ENCODE measurements at regions of chr6 and their contacts with region 1.

Region 1: DNA sequence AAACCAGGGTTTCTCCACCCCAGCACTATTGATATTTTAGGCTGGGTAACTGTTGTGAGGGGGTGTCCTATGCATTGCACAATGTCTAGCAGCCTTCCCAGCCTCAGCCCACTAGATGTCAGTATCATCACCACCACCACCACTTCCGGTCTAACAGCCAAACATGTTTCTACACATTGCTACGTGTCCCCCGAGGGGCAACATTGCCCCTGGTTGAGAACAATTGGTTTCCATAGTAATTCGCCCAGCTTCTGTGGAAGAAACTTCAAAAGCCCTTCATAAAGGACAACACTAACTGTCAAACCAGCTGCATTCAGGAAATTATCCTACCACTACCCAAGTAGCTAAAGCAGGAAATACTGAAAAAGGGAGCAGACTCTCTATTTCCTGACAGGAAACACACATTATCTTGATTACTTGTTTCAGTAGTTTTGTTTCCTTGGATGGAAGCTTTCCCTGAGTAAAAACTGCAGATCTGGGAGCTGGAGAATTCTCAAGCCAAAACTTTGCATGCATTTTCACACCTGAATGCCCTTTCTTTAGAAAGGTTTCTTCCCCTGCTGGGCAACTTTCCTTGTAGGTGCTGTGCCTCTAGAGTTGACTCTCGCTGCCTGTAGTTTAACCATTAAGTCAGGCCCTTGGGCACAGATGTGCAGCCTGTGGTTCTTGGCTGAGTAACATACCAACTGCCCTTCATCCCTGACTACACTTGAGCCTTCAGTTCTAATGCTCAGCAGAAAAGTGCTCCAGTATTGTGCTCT is 23.6 kb downstream of the PKHD1 start:
- DNase-seq: peak; percentile 76
- H3K4me3 Mint-ChIP-seq: peak overlapping the region; percentile 20
- H3K27ac Mint-ChIP-seq: peak overlapping the region; percentile 72
- H3K4me1 Mint-ChIP-seq: peaks cover 10% of the 10 kb centered on the region
- H3K27me3 Mint-ChIP-seq: no peaks in the 10 kb centered on the region

Region 2: DNA sequence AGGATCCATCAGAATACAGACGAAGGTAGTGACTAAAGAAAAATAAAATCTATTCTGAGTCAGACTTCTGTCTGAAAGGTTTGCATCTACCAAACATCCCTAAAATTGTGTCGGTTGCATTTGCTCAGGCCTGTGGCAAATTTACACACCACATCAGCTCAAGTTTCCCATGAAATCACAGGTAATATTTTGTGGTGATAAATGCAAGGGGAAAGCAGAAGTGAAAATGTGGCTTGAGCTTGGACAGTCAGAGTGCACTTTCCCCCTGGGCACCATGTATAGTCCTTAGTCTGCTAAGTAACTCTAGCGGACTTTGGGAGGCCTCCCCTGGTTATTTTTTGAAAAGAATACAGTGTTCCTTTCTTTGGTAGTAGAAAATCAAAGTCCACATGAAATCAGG is 135.4 kb before region 1 on chr6:
- CTCF ChIA-PET with region 1: no interaction called
- intact Hi-C with region 1: no loop called
- DNase-seq: no peak
- H3K4me3 Mint-ChIP-seq: no peak overlapping the region
- H3K27ac Mint-ChIP-seq: no peak overlapping the region
- H3K4me1 Mint-ChIP-seq: no peaks in the 10 kb centered on the region
- H3K27me3 Mint-ChIP-seq: no peaks in the 10 kb centered on the region

Region 3: GRCh38 chr6:51996296-51996947 is 67.3 kb before region 1 on chr6:
- CTCF ChIA-PET with region 1: no interaction called
- intact Hi-C with region 1: no loop called
- DNase-seq: no peak
- H3K4me3 Mint-ChIP-seq: no peak overlapping the region
- H3K27ac Mint-ChIP-seq: no peak overlapping the region
- H3K4me1 Mint-ChIP-seq: no peaks in the 10 kb centered on the region
- H3K27me3 Mint-ChIP-seq: peaks cover 10% of the 10 kb centered on the region

Region 4: GRCh38 chr6:52016915-52017748 is 46.6 kb before region 1 on chr6:
- CTCF ChIA-PET with region 1: no interaction called
- intact Hi-C with region 1: no loop called
- DNase-seq: no peak
- H3K4me3 Mint-ChIP-seq: no peak overlapping the region
- H3K27ac Mint-ChIP-seq: no peak overlapping the region
- H3K4me1 Mint-ChIP-seq: no peaks in the 10 kb centered on the region
- H3K27me3 Mint-ChIP-seq: peaks cover 3% of the 10 kb centered on the region

Region 5: GRCh38 chr6:52049252-52050050 is 14.3 kb before region 1 on chr6:
- CTCF ChIA-PET with region 1: interaction called, 55 read pairs
- intact Hi-C with region 1: no loop called
- DNase-seq: peak; percentile 25
- H3K4me3 Mint-ChIP-seq: no peak overlapping the region
- H3K27ac Mint-ChIP-seq: no peak overlapping the region
- H3K4me1 Mint-ChIP-seq: no peaks in the 10 kb centered on the region
- H3K27me3 Mint-ChIP-seq: peaks cover 4% of the 10 kb centered on the region

Region 6: DNA sequence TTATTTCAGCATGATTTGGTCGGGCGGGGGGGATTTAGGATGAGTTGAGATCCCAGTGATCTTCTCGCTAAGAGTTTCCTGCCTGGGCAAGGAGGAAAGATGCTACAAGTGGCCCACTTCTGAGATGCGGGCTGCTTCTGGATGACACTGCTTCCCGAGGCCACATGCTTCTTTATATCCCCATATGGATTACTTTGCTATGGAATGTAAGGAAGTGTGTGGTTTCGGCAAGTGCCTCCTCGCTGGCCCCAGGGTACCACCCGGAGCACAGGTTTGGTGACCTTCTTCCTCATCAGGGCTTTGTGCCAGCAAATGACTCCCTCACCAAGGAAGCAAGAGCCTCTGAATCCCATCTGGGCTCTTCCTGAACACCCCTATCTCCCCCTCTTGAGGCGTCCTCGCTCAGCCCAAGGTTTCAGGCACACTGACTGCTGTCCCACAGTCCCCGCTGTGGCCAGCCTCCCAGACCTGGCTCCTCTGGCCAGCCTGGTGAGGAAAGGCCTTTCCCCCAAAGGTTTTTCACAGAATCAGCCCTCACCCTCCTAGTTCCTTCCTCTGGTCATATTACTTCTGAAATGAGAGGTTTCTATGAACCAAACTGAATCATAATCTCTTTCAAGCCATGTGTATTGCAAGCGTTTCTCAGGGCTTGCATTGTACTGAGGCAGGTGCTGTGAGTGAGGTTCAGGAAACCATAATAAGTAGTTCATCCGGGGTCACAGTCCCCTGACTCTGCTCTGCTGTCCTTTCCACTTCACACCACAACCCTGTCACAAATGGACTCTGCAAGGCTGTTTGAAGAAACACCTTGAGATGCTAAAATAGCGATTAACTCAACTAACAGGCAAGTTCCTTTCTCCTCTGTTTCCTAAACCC is 80.7 kb after region 1 on chr6:
- CTCF ChIA-PET with region 1: no interaction called
- intact Hi-C with region 1: loop called (anchors 5 kb)
- DNase-seq: no peak
- H3K4me3 Mint-ChIP-seq: no peak overlapping the region
- H3K27ac Mint-ChIP-seq: no peak overlapping the region
- H3K4me1 Mint-ChIP-seq: no peaks in the 10 kb centered on the region
- H3K27me3 Mint-ChIP-seq: peaks cover 43% of the 10 kb centered on the region

Region 7: DNA sequence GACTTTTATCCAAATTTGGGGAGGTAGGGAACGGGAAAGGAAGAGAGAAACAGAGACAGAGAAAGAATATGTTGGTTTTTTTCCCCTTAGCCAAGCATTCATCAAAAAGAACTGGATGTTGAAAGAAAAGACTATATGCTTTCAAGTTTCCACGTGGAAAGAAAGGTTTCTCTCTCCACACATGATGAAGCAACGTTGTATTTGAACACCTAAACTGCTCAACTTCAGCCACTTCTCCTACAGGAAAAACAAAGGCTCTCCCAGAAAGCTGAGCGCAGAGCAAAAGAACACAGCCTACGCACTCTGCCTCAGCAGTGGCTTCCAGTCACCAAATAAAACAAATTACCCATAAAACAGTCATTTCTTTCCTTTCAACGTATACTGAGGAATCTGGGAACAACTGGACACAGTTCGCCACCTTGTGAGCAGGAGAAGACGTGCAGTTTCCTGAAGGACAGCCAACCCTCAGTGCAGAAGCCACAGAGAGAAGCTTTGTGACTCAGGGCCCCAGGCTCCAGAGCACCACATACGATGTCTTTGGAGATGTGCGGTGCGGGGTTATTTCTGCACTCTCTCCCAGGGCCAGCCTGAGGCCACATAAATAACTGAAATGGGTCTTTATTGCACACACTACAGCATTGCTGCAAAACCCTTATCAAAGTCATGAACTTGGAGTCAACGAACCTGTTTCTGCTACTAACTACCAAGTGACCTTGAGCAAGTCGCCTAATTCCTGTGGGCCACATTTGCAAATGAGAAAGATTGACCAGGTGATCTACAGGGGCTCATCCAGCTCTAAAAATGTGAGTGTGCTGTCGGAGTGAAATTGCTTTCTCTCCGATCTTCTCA is 170.4 kb after region 1 on chr6:
- CTCF ChIA-PET with region 1: interaction called, 12 read pairs
- intact Hi-C with region 1: loop called (anchors 1 kb)
- DNase-seq: peak; percentile 62
- H3K4me3 Mint-ChIP-seq: no peak overlapping the region
- H3K27ac Mint-ChIP-seq: no peak overlapping the region
- H3K4me1 Mint-ChIP-seq: peaks cover 6% of the 10 kb centered on the region
- H3K27me3 Mint-ChIP-seq: peaks cover 23% of the 10 kb centered on the region

Region 8: GRCh38 chr6:52399511-52400312 is 335.9 kb after region 1 on chr6:
- CTCF ChIA-PET with region 1: no interaction called
- intact Hi-C with region 1: loop called (anchors 5 kb)
- DNase-seq: peak; percentile 64
- H3K4me3 Mint-ChIP-seq: no peak overlapping the region
- H3K27ac Mint-ChIP-seq: peak overlapping the region; percentile 73
- H3K4me1 Mint-ChIP-seq: peaks cover 72% of the 10 kb centered on the region
- H3K27me3 Mint-ChIP-seq: no peaks in the 10 kb centered on the region

Region 9: DNA sequence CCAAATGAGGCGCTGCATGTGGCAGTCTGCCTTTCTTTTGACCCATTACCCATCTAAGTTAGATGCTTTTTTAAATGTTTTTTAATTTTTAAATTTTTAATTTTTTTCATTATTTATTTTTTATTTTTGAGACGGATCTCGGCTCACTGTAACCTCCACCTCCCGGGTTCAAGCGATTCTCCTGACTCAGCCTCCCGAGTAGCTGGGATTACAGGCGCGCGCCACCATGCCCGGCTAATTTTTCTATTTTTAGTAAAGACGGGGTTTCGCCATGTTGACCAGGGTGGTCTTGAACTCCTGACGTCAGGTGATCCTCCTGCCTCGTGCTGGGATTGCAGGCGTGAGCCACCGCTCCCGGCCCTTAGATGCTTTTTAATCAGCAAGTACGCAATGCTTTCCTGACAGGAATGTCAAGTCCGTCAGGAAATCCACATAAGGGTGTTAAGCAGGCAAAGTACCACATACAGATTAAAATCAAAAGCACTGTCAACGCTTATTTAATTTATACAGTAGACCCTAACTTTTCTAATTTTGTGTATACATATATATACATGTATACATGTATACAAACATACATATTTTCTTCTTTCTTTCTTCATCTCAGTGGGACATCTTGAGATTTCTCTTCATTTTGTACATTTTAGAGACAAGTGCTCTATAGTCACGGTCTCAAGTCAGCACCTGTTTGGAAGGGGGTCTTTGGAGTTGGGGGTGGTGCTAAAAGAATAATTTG is 932.3 kb after region 1 on chr6:
- CTCF ChIA-PET with region 1: no interaction called
- intact Hi-C with region 1: no loop called
- DNase-seq: peak; percentile 54
- H3K4me3 Mint-ChIP-seq: peak overlapping the region; percentile 98
- H3K27ac Mint-ChIP-seq: peak overlapping the region; percentile 99
- H3K4me1 Mint-ChIP-seq: peaks cover 29% of the 10 kb centered on the region
- H3K27me3 Mint-ChIP-seq: peaks cover 13% of the 10 kb centered on the region

Measured in activated naive CD4-positive, alpha-beta T cell treated with anti-CD3 and anti-CD28 coated beads for 36 hours (primary cell).